ENCODE measurements at regions of chr15 and their contacts with region 1.

Region 1: DNA sequence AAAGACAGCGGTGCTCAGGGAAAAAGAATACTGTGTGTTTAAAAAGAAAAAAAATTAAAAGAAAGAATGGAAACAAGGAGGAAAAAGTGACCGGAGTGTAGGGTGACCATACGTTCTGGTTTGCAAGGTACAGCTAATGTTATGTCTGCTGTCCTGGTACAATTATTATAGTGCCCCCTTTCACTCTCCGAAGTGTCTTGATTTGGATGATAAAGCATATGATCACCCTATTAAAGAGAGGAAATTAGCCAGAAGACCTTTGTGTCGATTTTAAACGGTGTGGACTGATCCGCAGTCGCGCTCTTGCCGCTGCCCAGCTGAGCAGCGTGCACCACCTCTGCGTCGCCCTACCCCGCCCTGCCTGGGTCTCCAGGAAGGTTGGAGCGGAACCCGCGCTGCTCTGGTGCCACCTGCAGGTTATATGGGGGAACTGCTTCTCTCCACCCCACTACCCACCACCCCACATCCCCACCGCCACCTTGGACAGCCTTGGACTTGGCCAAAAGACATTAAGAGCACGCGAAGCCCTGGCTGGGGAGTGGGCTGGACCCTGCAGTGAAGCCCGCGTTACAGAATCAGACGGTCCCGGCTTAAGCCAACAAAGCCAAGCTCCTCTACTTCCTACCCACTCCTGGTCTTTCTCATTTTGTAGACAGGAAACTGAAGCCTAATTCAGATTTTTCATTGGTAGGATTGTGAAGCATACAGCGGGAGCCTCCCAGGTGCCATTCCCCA is 41.2 kb upstream of the UBE2Q2 start:
- DNase-seq: peak; percentile 86
- ATAC-seq: peak; percentile 100
- H3K4me3 Mint-ChIP-seq: peak overlapping the region; percentile 50
- H3K27ac Mint-ChIP-seq: no peak overlapping the region
- H3K4me1 Mint-ChIP-seq: peaks cover 3% of the 10 kb centered on the region
- H3K27me3 Mint-ChIP-seq: peaks cover 30% of the 10 kb centered on the region
- CTCF ChIP-seq: peak; percentile 87

Region 2: DNA sequence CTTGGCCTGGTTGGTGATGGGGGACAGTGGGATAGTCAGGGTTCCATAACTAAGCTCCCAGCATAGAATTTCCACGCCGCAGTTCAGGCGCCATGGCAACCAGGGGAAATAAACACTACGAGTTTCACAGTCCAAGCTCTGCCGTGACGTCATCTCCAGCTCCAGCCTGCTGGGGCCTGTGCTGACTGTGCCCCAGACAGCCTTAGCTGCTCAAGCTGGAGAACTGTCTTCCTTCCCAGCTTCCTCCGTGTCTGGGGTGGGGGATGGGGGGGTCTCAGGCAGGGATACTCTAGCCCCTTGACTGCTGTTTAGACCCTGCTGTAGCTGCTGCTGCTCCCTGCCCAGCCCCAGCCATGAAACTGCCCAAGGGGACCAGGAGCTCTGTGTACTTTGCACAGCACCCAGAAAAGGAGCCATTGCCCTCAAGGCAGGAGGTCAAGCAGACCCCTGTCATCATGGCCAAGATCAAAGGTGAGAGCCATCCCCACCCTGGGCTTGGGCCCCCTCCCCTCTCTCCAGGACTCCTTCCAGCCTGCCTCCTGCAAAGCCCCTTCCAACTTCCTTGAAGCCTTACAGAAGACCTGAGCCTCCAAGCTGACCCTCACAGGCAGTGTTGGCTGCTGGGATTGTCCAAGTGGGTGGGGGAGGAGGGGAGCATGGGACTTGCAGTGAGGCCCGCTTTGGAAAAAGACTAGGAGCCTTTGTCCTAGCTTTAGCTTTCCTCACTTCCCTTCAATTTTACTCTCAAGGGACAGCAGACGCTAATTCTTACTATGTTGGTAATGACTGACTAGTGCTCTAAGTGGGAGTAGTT is 78.0 kb before region 1 on chr15:
- CTCF ChIA-PET with region 1: interaction called, 43 read pairs
- POLR2A ChIA-PET with region 1: interaction called, 4 read pairs
- intact Hi-C with region 1: loop called (anchors 2 kb)
- DNase-seq: peak; percentile 63
- ATAC-seq: peak; percentile 26
- H3K4me3 Mint-ChIP-seq: no peak overlapping the region
- H3K27ac Mint-ChIP-seq: no peak overlapping the region
- H3K4me1 Mint-ChIP-seq: peaks cover 8% of the 10 kb centered on the region
- H3K27me3 Mint-ChIP-seq: peaks cover 20% of the 10 kb centered on the region
- CTCF ChIP-seq: no peak

Region 3: GRCh38 chr15:75732809-75733451 is 69.1 kb before region 1 on chr15:
- CTCF ChIA-PET with region 1: interaction called, 43 read pairs
- POLR2A ChIA-PET with region 1: no interaction called
- intact Hi-C with region 1: loop called (anchors 2 kb)
- DNase-seq: peak; percentile 73
- ATAC-seq: peak; percentile 84
- H3K4me3 Mint-ChIP-seq: no peak overlapping the region
- H3K27ac Mint-ChIP-seq: no peak overlapping the region
- H3K4me1 Mint-ChIP-seq: peaks cover 13% of the 10 kb centered on the region
- H3K27me3 Mint-ChIP-seq: peaks cover 5% of the 10 kb centered on the region
- CTCF ChIP-seq: peak; percentile 87

Region 4: GRCh38 chr15:75776065-75776423 is 26.0 kb before region 1 on chr15:
- CTCF ChIA-PET with region 1: interaction called, 11 read pairs
- POLR2A ChIA-PET with region 1: no interaction called
- intact Hi-C with region 1: no loop called
- DNase-seq: peak; percentile 13
- ATAC-seq: no peak
- H3K4me3 Mint-ChIP-seq: no peak overlapping the region
- H3K27ac Mint-ChIP-seq: no peak overlapping the region
- H3K4me1 Mint-ChIP-seq: peaks cover 16% of the 10 kb centered on the region
- H3K27me3 Mint-ChIP-seq: no peaks in the 10 kb centered on the region
- CTCF ChIP-seq: no peak

Region 5: GRCh38 chr15:75815811-75816719 is 14.0 kb after region 1 on chr15:
- CTCF ChIA-PET with region 1: interaction called, 20 read pairs
- POLR2A ChIA-PET with region 1: interaction called, 3 read pairs
- intact Hi-C with region 1: no loop called
- DNase-seq: no peak
- ATAC-seq: no peak
- H3K4me3 Mint-ChIP-seq: no peak overlapping the region
- H3K27ac Mint-ChIP-seq: no peak overlapping the region
- H3K4me1 Mint-ChIP-seq: peaks cover 11% of the 10 kb centered on the region
- H3K27me3 Mint-ChIP-seq: no peaks in the 10 kb centered on the region
- CTCF ChIP-seq: no peak

Region 6: DNA sequence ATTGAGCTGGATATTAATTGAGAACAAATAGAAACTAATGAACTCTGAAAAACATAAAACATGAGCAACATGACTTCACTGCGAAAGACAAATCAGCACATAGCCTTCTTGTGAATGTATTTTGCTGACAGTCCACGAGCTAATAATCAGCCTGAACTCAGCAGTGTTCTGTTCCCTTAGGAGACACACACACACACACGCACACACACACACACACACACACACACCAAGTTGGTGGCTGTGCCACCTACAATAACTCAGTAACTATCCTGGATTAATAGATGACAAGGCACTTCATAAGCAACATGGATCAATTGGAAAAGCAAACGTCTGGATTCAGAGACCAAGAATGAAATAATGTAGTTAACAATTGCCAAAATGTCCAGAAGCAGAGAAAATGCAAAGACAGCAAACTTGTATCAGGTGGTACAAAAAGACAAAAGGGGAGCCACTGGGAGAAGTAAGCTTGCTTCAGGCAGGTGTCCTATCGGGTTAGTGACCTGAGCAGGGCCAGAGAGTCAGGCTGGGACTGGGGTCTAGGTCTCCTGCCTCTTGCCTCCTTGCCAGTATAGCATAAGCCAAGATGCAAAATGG is 20.8 kb after region 1 on chr15:
- CTCF ChIA-PET with region 1: interaction called, 20 read pairs
- POLR2A ChIA-PET with region 1: interaction called, 3 read pairs
- intact Hi-C with region 1: no loop called
- DNase-seq: no peak
- ATAC-seq: no peak
- H3K4me3 Mint-ChIP-seq: no peak overlapping the region
- H3K27ac Mint-ChIP-seq: no peak overlapping the region
- H3K4me1 Mint-ChIP-seq: no peaks in the 10 kb centered on the region
- H3K27me3 Mint-ChIP-seq: no peaks in the 10 kb centered on the region
- CTCF ChIP-seq: no peak

Measured in activated CD8-positive, alpha-beta T cell treated with anti-CD3 and anti-CD28 coated beads for 36 hours (primary cell).